ENCODE measurements at regions of chr20 and their contacts with region 1.

Region 1: DNA sequence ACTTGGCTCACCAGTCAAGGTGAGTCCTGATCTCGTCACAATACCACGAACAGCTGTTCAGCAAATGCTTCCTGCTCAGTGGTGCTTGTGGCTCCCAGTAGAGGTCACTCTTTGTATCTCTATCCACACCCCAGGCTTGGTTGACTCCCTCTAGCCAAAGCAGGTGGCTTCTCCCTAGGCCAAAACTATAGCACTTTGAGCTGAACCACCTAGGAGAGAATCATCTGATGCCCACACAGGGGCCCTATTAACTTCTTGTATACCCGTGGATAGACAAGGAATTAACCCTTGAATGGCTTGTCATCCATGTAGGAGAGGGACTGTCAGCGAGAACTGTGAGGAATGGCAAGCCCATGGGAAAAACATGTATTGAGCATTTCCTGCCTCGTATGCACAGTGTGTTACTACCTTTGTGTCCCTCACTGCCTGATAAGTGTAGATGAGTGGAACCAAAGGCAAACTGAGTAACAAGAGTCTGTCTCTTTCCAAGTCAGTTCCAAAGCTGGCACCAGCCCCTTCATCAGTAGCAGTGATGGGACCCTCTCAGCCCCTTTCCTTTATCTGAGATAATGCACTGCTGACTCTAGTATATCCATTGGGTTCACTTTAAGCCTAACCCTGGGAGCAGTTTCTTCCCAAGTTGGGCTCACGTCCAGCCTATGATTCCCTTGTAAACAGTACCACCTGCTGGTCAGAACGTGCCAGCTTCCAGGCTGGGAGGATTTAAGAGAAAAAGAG is 42.5 kb downstream of the EIF2S2 start:
- DNase-seq: peak; percentile 86
- ATAC-seq: peak; percentile 86
- H3K4me3 ChIP-seq: no peak overlapping the region
- H3K27ac ChIP-seq: no peak overlapping the region
- H3K4me1 ChIP-seq: no peaks in the 10 kb centered on the region
- H3K27me3 ChIP-seq: no peaks in the 10 kb centered on the region
- CTCF ChIP-seq: peak; percentile 95
- EP300 ChIP-seq: no peak
- POLR2A ChIP-seq: no peak
- RAD21 ChIP-seq: peak; percentile 97

Region 2: GRCh38 chr20:33862709-33863403 is 206.7 kb before region 1 on chr20:
- CTCF ChIA-PET with region 1: interaction called, 39 read pairs
- POLR2A ChIA-PET with region 1: no interaction called
- in situ Hi-C with region 1: no loop called
- intact Hi-C with region 1: loop called (anchors 1 kb)
- DNase-seq: peak; percentile 76
- ATAC-seq: peak; percentile 74
- H3K4me3 ChIP-seq: peak overlapping the region in 2 of 3 experiments; percentile 13 to 59; a peak in 3 of 6 replicates
- H3K27ac ChIP-seq: no peak overlapping the region
- H3K4me1 ChIP-seq: peaks cover 42% of the 10 kb centered on the region
- H3K27me3 ChIP-seq: peaks cover 5 to 40% of the 10 kb centered on the region in 2 experiments
- CTCF ChIP-seq: peak; percentile 87
- EP300 ChIP-seq: no peak
- POLR2A ChIP-seq: no peak
- RAD21 ChIP-seq: peak; percentile 87

Region 3: GRCh38 chr20:33915726-33916331 is 153.7 kb before region 1 on chr20:
- CTCF ChIA-PET with region 1: interaction called, 31 read pairs
- POLR2A ChIA-PET with region 1: no interaction called
- in situ Hi-C with region 1: no loop called
- intact Hi-C with region 1: no loop called
- DNase-seq: peak; percentile 47
- ATAC-seq: peak; percentile 79
- H3K4me3 ChIP-seq: no peak overlapping the region
- H3K27ac ChIP-seq: no peak overlapping the region
- H3K4me1 ChIP-seq: peaks cover 38% of the 10 kb centered on the region
- H3K27me3 ChIP-seq: peaks cover 0 to 4% of the 10 kb centered on the region in 2 experiments; a peak in 1 of 5 replicates
- CTCF ChIP-seq: peak; percentile 90
- EP300 ChIP-seq: no peak
- POLR2A ChIP-seq: no peak
- RAD21 ChIP-seq: peak; percentile 60

Region 4: GRCh38 chr20:33947709-33948295 is 121.7 kb before region 1 on chr20:
- CTCF ChIA-PET with region 1: interaction called, 18 read pairs
- POLR2A ChIA-PET with region 1: no interaction called
- in situ Hi-C with region 1: no loop called
- intact Hi-C with region 1: loop called (anchors 1 kb)
- DNase-seq: peak; percentile 83
- ATAC-seq: peak; percentile 66
- H3K4me3 ChIP-seq: no peak overlapping the region
- H3K27ac ChIP-seq: no peak overlapping the region
- H3K4me1 ChIP-seq: peaks cover 12% of the 10 kb centered on the region; the same call in 1 of the 2 replicates
- H3K27me3 ChIP-seq: peaks cover 0 to 4% of the 10 kb centered on the region in 2 experiments; a peak in 1 of 5 replicates
- CTCF ChIP-seq: peak; percentile 89
- EP300 ChIP-seq: no peak; a peak in 1 of 4 replicates
- POLR2A ChIP-seq: no peak
- RAD21 ChIP-seq: peak; percentile 84

Region 5: GRCh38 chr20:34129518-34130162 is 60.1 kb after region 1 on chr20:
- CTCF ChIA-PET with region 1: interaction called, 9 read pairs
- POLR2A ChIA-PET with region 1: interaction called, 3 read pairs
- in situ Hi-C with region 1: no loop called
- intact Hi-C with region 1: loop called (anchors 1 kb)
- DNase-seq: peak; percentile 89
- ATAC-seq: peak; percentile 94
- H3K4me3 ChIP-seq: peak overlapping the region in 1 of 3 experiments; percentile 36; a peak in 2 of 6 replicates
- H3K27ac ChIP-seq: no peak overlapping the region
- H3K4me1 ChIP-seq: peaks cover 58% of the 10 kb centered on the region
- H3K27me3 ChIP-seq: no peaks in the 10 kb centered on the region
- CTCF ChIP-seq: peak; percentile 98
- EP300 ChIP-seq: no peak
- POLR2A ChIP-seq: no peak
- RAD21 ChIP-seq: peak; percentile 96

Region 6: DNA sequence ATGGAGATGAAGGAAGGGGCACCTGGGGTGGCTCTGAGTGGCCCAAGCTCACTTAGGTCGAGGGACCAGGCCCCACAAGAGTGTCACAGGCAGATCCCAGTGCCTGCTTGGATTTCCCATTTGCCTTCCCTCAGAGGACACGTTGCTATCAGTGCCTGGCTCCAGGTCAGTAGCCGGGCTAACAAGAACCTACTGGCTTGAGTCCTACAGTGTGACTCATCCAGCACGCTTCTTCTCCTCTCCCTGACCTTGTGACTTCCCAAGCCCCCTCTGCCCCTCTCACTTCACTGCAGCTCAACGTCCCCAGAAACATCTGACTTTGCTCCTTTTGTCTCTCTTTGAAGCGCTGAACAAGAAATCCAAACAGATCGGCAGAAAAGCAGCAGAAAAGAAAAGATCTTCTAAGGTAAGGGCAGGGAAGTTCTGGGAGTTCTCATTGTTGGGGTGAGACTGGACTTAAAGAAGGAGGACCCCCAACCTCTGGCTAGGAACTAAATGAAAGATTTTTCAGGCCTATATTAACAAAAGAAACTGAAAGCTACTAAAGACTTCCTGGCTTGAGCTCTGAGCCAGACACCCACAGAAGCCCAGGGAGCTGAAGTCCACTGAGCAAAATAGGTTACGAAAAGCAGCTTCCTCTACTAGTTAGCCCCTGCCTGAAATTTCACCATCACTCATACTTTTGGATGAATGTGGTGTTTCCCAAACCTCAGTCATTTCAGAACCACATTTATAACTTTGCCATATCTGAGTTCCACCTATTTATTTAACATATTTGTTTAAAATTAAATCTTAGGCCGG is 193.2 kb after region 1 on chr20:
- CTCF ChIA-PET with region 1: no interaction called
- POLR2A ChIA-PET with region 1: no interaction called
- in situ Hi-C with region 1: no loop called
- intact Hi-C with region 1: no loop called
- DNase-seq: peak; percentile 70
- ATAC-seq: peak; percentile 84
- H3K4me3 ChIP-seq: peak overlapping the region in 2 of 3 experiments; percentile 45 to 47
- H3K27ac ChIP-seq: peak overlapping the region; percentile 79
- H3K4me1 ChIP-seq: peaks cover 15% of the 10 kb centered on the region
- H3K27me3 ChIP-seq: no peaks in the 10 kb centered on the region
- CTCF ChIP-seq: 0 out of 2 replicates have a peak, but pooled peaks have one; percentile 5
- EP300 ChIP-seq: no peak
- POLR2A ChIP-seq: peak in 1 of 2 experiments; percentile 15; a peak in 1 of 4 replicates
- RAD21 ChIP-seq: no peak

Region 7: GRCh38 chr20:34676642-34677373 is 607.3 kb after region 1 on chr20 and contains the start of gene PIGU:
- CTCF ChIA-PET with region 1: no interaction called
- POLR2A ChIA-PET with region 1: no interaction called
- in situ Hi-C with region 1: no loop called
- intact Hi-C with region 1: no loop called
- DNase-seq: peak; percentile 95
- ATAC-seq: peak; percentile 97
- H3K4me3 ChIP-seq: peak within 1 kb of the TSS; percentile 87 to 96 (median 89)
- H3K27ac ChIP-seq: peak within 1 kb of the TSS; percentile 86
- H3K4me1 ChIP-seq: peaks cover 29% of the 10 kb centered on the region
- H3K27me3 ChIP-seq: peaks cover 0 to 4% of the 10 kb centered on the region in 2 experiments; a peak in 1 of 5 replicates
- CTCF ChIP-seq: peak; percentile 59; the same call in 1 of the 2 replicates
- EP300 ChIP-seq: peak in 1 of 2 experiments; percentile 61; a peak in 1 of 4 replicates
- POLR2A ChIP-seq: peak; percentile 88 to 91
- RAD21 ChIP-seq: peak; percentile 61
- total RNA-seq, gene PIGU: 27.1 and 45.5 TPM in 2 replicates

Measured in HepG2 (cell line).